ENCODE measurements at regions of chr12 and their contacts with region 1.

Region 1: GRCh38 chr12:50542448-50542847 is 37.7 kb downstream of the DIP2B start:
- DNase-seq: no peak
- H3K4me3 Mint-ChIP-seq: no peak overlapping the region
- H3K27ac Mint-ChIP-seq: peak overlapping the region; percentile 88
- H3K4me1 Mint-ChIP-seq: peaks cover 20% of the 10 kb centered on the region
- H3K27me3 Mint-ChIP-seq: no peaks in the 10 kb centered on the region

Region 2: GRCh38 chr12:50246873-50247612 is 295.4 kb before region 1 on chr12:
- intact Hi-C with region 1: loop called (anchors 10 kb)
- DNase-seq: peak; percentile 40
- H3K4me3 Mint-ChIP-seq: peak overlapping the region; percentile 89
- H3K27ac Mint-ChIP-seq: peak overlapping the region; percentile 89
- H3K4me1 Mint-ChIP-seq: peaks cover 65% of the 10 kb centered on the region
- H3K27me3 Mint-ChIP-seq: no peaks in the 10 kb centered on the region

Region 3: GRCh38 chr12:50555471-50555885 is 13.0 kb after region 1 on chr12:
- intact Hi-C with region 1: loop called (anchors 1 kb)
- DNase-seq: no peak
- H3K4me3 Mint-ChIP-seq: peak overlapping the region; percentile 44
- H3K27ac Mint-ChIP-seq: peak overlapping the region; percentile 95
- H3K4me1 Mint-ChIP-seq: peaks cover 33% of the 10 kb centered on the region
- H3K27me3 Mint-ChIP-seq: no peaks in the 10 kb centered on the region

Measured in activated T-helper 2 cell treated with anti-CD3 and anti-CD28 coated beads, Interferon-gamma antibody, Interleukin-2, Interleukin-4, amounts not matched to agents 10 μg/mL and 5 μg/mL and 100 μg/mL, durations not matched to agents 14 hours and 24 hours and 36 hours (primary cell).